A673 (cell line): ENCODE measurements at regions of chr18 and their contacts with region 1.

Region 1: GRCh38 chr18:67379981-67380380 is 136.5 kb downstream of the DSEL start:
- DNase-seq: no peak
- H3K4me3 ChIP-seq: no peak overlapping the region
- H3K27ac ChIP-seq: no peak overlapping the region
- H3K4me1 ChIP-seq: no peaks in the 10 kb centered on the region
- H3K27me3 ChIP-seq: no peaks in the 10 kb centered on the region
- CTCF ChIP-seq: no peak

Region 2: GRCh38 chr18:68033466-68033865 is 653.5 kb after region 1 on chr18:
- CTCF ChIA-PET with region 1: no interaction called
- POLR2A ChIA-PET with region 1: interaction called, 13 read pairs
- intact Hi-C with region 1: no loop called
- DNase-seq: no peak
- H3K4me3 ChIP-seq: no peak overlapping the region
- H3K27ac ChIP-seq: no peak overlapping the region
- H3K4me1 ChIP-seq: no peaks in the 10 kb centered on the region
- H3K27me3 ChIP-seq: no peaks in the 10 kb centered on the region
- CTCF ChIP-seq: no peak